Cardiac septum (tissue), 1 donor: ENCODE measurements at regions of chr17 and their contacts with region 1.

Region 1: DNA sequence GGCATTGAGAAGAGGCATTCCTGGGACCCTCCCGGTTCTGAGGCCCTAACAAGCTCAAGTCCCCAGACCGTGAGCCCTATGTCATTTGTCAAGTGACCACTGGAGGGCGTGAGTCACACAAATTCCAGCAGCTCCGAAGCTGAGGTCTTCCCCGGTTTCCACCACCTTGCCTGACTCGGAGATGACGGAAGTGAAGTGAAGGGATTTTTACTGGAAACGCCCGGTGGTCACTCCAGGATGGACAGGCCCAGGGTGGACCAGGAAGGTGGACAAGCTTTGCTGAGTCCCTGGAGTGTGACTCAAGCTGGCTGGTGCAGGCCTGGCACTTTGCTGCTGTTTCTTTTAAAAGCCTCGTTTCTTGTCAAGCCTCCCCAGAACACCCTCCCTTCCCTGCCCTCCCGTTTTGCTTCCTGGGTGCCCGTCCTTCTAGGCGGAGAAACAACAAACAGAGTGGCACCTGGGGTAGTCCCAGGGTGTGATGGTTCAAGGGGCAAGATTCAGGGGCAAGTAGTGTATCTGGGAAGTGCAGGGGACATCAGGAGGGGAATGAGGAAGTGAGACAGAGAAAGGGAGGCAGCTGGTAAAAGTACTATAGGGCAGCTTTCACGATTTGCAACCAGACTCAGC is 5.3 kb upstream of the NOS2 start:
- DNase-seq: peak; percentile 86

Region 2: DNA sequence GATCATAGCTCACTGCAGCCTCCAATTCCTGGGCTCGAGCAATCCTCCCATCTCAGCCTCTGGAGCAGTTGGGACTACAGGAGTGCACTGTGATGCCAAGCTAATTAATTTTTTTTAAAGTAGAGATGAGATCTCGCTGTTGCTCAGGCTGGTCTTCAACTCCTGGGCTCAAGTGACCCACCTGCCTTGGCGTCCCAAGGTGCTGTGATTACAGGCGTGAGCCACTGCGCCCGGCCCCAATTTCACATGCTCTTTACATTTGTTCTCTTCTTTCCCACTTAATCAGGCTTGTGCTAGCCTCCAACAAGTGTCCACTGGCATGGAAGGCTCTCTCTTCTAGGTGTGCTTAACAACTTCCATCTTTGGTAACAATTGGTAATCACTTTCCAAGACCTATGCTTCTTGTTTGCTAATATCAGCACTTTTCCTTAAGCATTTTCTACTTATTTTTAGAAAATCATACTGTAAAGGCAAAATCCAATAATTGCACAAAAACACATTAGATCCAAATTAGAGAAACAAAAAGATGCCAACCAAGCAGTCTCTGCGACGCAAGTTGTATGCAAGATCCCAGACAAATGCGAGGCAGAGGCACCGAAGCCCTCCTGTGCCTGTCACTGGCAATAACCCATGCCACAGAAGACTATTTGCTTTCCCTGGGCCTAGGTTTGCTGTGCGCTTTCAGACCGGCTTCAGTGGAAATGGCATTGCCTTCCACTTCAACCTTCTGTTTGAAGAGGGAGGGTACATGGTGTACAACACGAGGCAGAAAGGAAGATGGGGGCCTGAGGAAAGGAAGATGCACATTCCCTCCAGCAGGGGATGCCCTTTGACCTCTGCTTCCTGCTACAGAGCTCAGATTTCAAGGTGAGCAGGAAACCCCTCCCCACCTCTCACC is 57.9 kb before region 1 on chr17:
- intact Hi-C with region 1: no loop called
- DNase-seq: peak; percentile 22

Region 3: GRCh38 chr17:27879987-27880608 is 74.5 kb after region 1 on chr17:
- intact Hi-C with region 1: loop called (anchors 2 kb)
- DNase-seq: peak; percentile 80

Region 4: DNA sequence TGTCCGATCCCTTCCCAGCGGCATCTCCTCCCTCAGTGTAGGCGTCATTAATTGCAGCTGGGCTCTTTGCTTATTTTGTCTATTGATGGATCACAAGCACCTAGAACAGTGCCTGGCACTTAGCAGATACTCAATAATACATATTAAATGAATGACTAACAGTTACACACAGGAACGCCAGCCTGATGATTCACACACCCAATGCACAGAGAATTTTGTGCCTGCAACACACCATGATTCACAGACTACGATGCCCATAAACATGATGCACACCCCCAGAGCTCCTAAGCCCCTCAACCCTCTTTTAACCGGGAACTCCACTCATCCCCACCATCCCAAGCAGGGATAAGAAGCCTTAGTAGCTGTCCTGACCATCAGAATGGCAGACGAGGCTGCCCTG is 446.8 kb after region 1 on chr17:
- intact Hi-C with region 1: loop called (anchors 5 kb)
- DNase-seq: no peak

Region 5: DNA sequence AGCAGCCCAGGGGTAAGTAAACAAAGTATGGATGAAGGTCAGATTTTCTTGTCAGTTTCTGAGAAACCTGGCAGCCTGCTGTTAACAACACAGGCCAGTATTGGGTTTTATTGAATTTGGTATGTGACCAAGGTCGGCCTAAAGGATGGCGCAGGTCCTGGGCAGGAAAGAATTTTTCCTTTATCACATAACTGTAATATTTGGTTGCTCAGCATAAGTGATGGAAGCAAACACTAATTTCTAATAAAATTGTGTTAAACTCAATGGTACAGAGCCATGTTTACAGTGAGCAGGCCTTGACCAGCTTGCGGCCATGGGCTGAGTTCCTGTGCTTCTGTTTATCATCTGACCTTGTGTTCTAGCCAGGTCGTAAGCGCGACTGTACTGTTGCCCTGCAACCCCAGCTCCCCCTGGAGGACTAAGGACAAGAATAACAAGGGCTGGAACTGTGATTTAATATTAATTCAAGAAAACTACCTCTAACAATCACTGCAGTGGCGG is 541.2 kb after region 1 on chr17:
- intact Hi-C with region 1: loop called (anchors 10 kb)
- DNase-seq: peak; percentile 73